ENCODE measurements at regions of chr3 and their contacts with region 1.

Region 1: GRCh38 chr3:46276502-46277099 is 34.3 kb downstream of the CCR3 start:
- DNase-seq: peak; percentile 83
- H3K4me3 Mint-ChIP-seq: no peak overlapping the region
- H3K27ac Mint-ChIP-seq: peak overlapping the region; percentile 17
- H3K4me1 Mint-ChIP-seq: peaks cover 56% of the 10 kb centered on the region
- H3K27me3 Mint-ChIP-seq: peaks cover 23% of the 10 kb centered on the region

Region 2: DNA sequence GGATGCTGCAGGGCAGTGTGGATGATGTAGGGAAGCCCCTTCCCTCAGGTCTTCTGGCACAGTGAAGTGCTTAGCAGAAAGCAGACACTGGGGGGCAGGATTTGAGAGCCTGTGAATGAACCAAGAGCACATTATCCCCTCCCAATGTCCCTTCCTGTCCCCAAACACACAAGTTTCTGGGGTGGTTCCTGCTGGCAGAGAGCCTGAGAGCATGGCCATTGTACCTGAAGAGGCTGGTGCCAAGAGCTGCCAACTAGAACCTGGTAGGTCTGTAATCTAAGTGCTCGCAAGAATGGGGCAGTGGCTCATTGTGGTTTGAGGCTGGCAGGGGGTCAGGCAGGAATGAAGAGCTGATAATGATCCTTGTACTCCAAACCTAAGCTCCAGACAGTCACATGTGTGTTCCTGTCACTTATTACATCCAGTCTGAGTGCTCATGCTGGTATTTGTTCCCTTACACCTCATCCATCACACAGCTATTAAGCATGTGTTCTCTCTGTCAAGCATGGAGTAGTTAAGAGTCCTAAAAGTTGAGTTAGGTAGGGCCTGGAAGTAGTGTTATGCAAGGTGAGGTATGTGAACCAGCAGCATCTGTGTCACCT is 61.7 kb before region 1 on chr3:
- CTCF ChIA-PET with region 1: interaction called, 18 read pairs
- DNase-seq: peak; percentile 40
- H3K4me3 Mint-ChIP-seq: no peak overlapping the region
- H3K27ac Mint-ChIP-seq: no peak overlapping the region
- H3K4me1 Mint-ChIP-seq: peaks cover 21% of the 10 kb centered on the region
- H3K27me3 Mint-ChIP-seq: peaks cover 8% of the 10 kb centered on the region

Region 3: GRCh38 chr3:46236294-46237054 is 40.1 kb before region 1 on chr3:
- CTCF ChIA-PET with region 1: no interaction called
- DNase-seq: no peak
- H3K4me3 Mint-ChIP-seq: no peak overlapping the region
- H3K27ac Mint-ChIP-seq: no peak overlapping the region
- H3K4me1 Mint-ChIP-seq: no peaks in the 10 kb centered on the region
- H3K27me3 Mint-ChIP-seq: peaks cover 44% of the 10 kb centered on the region

Region 4: DNA sequence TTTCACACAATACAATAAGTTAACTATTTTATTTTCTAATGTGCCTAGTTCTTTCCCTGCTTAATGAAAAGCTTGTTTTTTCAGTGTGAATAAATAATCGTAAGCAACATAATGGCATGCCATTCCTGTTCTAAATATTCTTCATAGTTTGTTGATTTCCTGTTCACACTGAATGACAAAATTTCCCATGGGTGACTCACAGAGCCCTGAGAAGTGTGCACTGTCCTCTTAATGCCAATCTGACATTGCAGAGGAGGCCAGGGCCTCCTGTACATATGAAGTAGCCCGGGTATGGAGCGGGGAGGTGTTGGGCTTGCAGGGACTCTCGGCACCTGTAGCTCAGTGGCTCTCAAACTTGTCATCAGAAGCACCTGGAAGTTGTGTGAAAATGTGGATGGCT is 10.0 kb before region 1 on chr3:
- CTCF ChIA-PET with region 1: interaction called, 13 read pairs
- DNase-seq: no peak
- H3K4me3 Mint-ChIP-seq: no peak overlapping the region
- H3K27ac Mint-ChIP-seq: no peak overlapping the region
- H3K4me1 Mint-ChIP-seq: peaks cover 36% of the 10 kb centered on the region
- H3K27me3 Mint-ChIP-seq: peaks cover 18% of the 10 kb centered on the region

Region 5: DNA sequence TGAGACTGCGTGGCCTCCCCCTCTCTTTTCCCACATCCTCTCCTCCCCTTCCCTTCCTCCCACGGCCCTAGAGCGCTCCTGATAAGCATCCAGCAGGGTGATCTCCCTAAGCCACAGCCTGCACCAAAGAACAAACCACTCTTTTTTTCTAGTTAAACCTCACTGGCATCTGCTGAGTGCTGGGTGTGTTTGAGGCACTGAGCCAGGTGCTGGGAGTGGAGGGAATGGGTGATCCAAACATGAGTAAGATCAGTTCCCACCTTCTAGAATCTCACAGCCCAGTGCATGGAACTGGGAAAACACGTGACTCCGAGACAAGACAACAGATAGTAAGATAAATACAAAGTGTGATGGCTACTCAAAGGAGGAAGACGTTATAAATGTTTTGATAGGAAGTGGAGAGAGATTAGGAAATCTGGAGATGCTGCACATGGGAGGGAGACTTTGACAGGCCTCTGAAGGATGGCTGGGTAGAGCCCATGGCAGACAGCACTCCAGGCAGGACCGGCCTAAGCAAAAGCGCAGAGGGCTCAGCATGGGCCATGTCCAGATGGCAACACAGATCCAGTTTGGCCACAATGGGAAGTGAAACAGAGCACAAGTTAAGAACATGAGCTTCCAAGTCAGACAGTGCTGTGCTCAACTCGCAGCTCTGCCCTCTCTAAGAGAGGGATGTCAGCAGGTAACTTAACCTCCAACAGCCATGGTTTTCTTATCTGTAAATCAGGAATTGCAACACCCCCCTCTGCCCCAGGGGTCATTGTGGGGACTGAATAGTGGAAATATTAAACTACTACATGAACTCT is 21.3 kb after region 1 on chr3:
- CTCF ChIA-PET with region 1: interaction called, 22 read pairs
- DNase-seq: no peak
- H3K4me3 Mint-ChIP-seq: peak overlapping the region; percentile 17
- H3K27ac Mint-ChIP-seq: peak overlapping the region; percentile 92
- H3K4me1 Mint-ChIP-seq: peaks cover 93% of the 10 kb centered on the region
- H3K27me3 Mint-ChIP-seq: no peaks in the 10 kb centered on the region

Region 6: GRCh38 chr3:46462111-46462510 is 185.5 kb after region 1 on chr3:
- CTCF ChIA-PET with region 1: no interaction called
- DNase-seq: no peak
- H3K4me3 Mint-ChIP-seq: no peak overlapping the region
- H3K27ac Mint-ChIP-seq: no peak overlapping the region
- H3K4me1 Mint-ChIP-seq: peaks cover 6% of the 10 kb centered on the region
- H3K27me3 Mint-ChIP-seq: peaks cover 71% of the 10 kb centered on the region